MCF 10A (cell line): ENCODE measurements at regions of chr2 and their contacts with region 1.

Region 1: GRCh38 chr2:221124532-221125240 is 447.4 kb downstream of the EPHA4 start:
- DNase-seq: peak; percentile 95
- H3K4me3 Mint-ChIP-seq: no peak overlapping the region
- H3K27ac Mint-ChIP-seq: no peak overlapping the region
- H3K4me1 Mint-ChIP-seq: peaks cover 7% of the 10 kb centered on the region
- H3K27me3 Mint-ChIP-seq: no peaks in the 10 kb centered on the region
- CTCF ChIP-seq: no peak

Region 2: GRCh38 chr2:221085341-221085900 is 39.3 kb before region 1 on chr2:
- CTCF ChIA-PET with region 1: no interaction called
- POLR2A ChIA-PET with region 1: no interaction called
- intact Hi-C with region 1: loop called (anchors 1 kb)
- DNase-seq: no peak
- H3K4me3 Mint-ChIP-seq: no peak overlapping the region
- H3K27ac Mint-ChIP-seq: no peak overlapping the region
- H3K4me1 Mint-ChIP-seq: no peaks in the 10 kb centered on the region
- H3K27me3 Mint-ChIP-seq: no peaks in the 10 kb centered on the region
- CTCF ChIP-seq: no peak

Region 3: DNA sequence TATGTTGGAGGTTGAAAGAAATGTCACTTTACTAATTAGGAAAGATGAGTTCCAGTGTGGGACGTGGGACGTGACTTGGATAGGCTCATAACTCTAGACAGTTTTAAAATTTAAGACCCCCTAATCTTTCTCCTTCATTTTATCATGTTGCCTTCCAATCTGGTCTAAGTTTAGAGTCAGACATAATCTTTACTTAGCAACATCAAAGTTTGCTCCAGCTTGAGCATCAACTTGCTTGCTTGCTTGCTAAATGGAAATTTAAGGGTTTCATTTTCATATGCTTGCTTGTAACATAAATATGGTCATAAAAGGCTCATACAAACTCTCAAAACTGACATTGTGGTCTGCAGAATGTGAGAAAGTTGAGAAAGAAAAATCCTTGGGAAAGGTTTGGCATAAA is 18.5 kb after region 1 on chr2:
- CTCF ChIA-PET with region 1: no interaction called
- POLR2A ChIA-PET with region 1: no interaction called
- intact Hi-C with region 1: no loop called
- DNase-seq: no peak
- H3K4me3 Mint-ChIP-seq: no peak overlapping the region
- H3K27ac Mint-ChIP-seq: no peak overlapping the region
- H3K4me1 Mint-ChIP-seq: no peaks in the 10 kb centered on the region
- H3K27me3 Mint-ChIP-seq: no peaks in the 10 kb centered on the region
- CTCF ChIP-seq: no peak